ENCODE measurements at regions of chr6 and their contacts with region 1.

Region 1: DNA sequence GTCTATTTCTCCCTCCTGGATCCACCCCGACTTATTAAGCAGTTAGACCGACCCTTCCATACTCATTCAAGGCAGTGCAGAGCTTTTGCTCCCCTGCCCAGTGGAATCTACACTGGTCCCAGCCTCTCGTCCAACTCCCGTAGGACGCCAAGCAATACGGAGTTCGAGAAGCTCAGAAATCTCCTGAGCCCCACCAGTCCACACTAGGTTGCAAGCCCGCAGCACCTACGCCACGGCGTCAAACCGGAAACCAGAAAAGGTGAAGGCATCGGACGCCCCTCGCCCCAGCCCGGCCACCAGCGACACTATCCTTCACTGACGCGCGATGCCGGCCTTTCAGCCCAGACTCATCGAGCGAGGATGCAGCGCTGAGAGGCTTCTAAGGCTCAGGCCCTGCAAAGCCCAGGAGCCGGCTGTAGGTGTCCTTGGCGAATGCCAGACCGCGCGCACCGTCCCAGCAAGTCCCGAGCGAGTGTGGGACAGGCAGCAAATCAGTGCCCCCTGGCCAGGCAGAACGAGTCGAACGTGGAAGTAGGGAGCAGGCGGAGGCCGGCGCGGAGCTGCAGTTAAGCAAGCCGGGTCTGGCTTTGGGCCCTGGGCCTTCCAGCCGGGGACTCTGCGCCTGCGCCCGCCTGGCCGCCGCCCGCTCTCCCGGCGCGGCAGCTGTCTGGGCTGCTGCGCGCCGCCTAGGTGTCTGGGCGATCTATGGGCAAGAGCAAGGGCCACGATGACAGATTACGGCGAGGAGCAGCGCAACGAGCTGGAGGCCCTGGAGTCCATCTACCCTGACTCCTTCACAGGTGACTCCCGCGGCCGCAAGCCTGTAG is at the start of gene RWDD1:
- DNase-seq: peak; percentile 99
- ATAC-seq: peak; percentile 96 to 98
- H3K4me3 ChIP-seq: peak within 1 kb of the TSS; percentile 77 to 92 (median 86)
- H3K27ac ChIP-seq: peak within 1 kb of the TSS; percentile 88 to 94 (median 91)
- H3K4me1 ChIP-seq: peaks cover 41 to 43% of the 10 kb centered on the region in 2 donors
- H3K27me3 ChIP-seq: no peaks in the 10 kb centered on the region
- CTCF ChIP-seq: peak in 4 of 5 experiments; percentile 16 to 33 (median 24)
- POLR2A ChIP-seq: peak; percentile 76 to 77
- total RNA-seq, gene RWDD1: 42.1 to 63.8 (median 51.2) TPM

Region 2: DNA sequence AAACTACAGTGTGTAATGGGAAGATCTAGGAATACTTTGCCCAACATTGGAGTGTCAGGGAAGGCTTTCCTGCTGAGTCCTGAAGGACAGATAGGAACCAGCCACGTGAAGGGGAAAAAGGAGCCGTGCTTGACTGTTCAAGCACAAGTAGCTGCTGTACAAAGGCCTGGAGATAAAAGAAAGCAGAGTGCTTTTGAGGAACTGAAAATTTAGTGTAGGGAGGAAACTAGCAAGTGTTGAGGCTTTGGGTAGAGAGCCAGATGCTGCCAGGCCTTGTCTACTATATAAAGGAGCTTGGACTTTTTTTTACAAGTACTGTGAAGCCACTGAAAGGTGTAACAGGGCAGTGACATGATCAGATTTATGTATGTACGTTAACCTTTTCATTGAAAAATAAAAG is 161.3 kb before region 1 on chr6:
- in situ Hi-C with region 1: no loop called
- intact Hi-C with region 1: loop called (anchors 1 kb)
- DNase-seq: no peak
- ATAC-seq: no peak
- H3K4me3 ChIP-seq: no peak overlapping the region
- H3K27ac ChIP-seq: peak overlapping the region; percentile 70 to 85 (median 78)
- H3K4me1 ChIP-seq: peaks cover 65 to 75% of the 10 kb centered on the region in 2 donors
- H3K27me3 ChIP-seq: no peaks in the 10 kb centered on the region
- CTCF ChIP-seq: no peak
- POLR2A ChIP-seq: no peak

Region 3: GRCh38 chr6:116667623-116668022 is 96.6 kb after region 1 on chr6:
- in situ Hi-C with region 1: no loop called
- intact Hi-C with region 1: loop called (anchors 5 kb)
- DNase-seq: no peak
- ATAC-seq: no peak
- H3K4me3 ChIP-seq: peak overlapping the region; percentile 74 to 91 (median 88)
- H3K27ac ChIP-seq: peak overlapping the region in 3 of 4 donors; percentile 79 to 82 (median 81)
- H3K4me1 ChIP-seq: peaks cover 18 to 24% of the 10 kb centered on the region in 2 donors
- H3K27me3 ChIP-seq: no peaks in the 10 kb centered on the region
- CTCF ChIP-seq: no peak
- POLR2A ChIP-seq: no peak

Region 4: GRCh38 chr6:116680975-116681808 is 110.1 kb after region 1 on chr6 and contains the start of gene KPNA5:
- in situ Hi-C with region 1: no loop called
- intact Hi-C with region 1: loop called (anchors 5 kb)
- DNase-seq: peak; percentile 73 to 82
- ATAC-seq: peak; percentile 88 to 91
- H3K4me3 ChIP-seq: peak within 1 kb of the TSS; percentile 73 to 85 (median 82)
- H3K27ac ChIP-seq: peak within 1 kb of the TSS; percentile 83 to 92 (median 87)
- H3K4me1 ChIP-seq: peaks cover 10 to 17% of the 10 kb centered on the region in 2 donors
- H3K27me3 ChIP-seq: no peaks in the 10 kb centered on the region
- CTCF ChIP-seq: peak in 2 of 5 experiments; percentile 13 to 20
- POLR2A ChIP-seq: peak; percentile 24 to 55
- total RNA-seq, gene KPNA5: 7.2 to 14.8 (median 12.9) TPM